HEK293T (cell line): ENCODE measurements at regions of chr19 and their contacts with region 1.

Region 1: GRCh38 chr19:47436712-47437401 is 17.5 kb upstream of the MEIS3 start:
- DNase-seq: peak; percentile 83

Region 2: GRCh38 chr19:47483800-47484690 is 47.2 kb after region 1 on chr19 and contains the start of gene KPTN:
- CTCF ChIA-PET with region 1: interaction called, 8 read pairs
- POLR2A ChIA-PET with region 1: interaction called, 12 read pairs
- DNase-seq: peak; percentile 95

Region 3: DNA sequence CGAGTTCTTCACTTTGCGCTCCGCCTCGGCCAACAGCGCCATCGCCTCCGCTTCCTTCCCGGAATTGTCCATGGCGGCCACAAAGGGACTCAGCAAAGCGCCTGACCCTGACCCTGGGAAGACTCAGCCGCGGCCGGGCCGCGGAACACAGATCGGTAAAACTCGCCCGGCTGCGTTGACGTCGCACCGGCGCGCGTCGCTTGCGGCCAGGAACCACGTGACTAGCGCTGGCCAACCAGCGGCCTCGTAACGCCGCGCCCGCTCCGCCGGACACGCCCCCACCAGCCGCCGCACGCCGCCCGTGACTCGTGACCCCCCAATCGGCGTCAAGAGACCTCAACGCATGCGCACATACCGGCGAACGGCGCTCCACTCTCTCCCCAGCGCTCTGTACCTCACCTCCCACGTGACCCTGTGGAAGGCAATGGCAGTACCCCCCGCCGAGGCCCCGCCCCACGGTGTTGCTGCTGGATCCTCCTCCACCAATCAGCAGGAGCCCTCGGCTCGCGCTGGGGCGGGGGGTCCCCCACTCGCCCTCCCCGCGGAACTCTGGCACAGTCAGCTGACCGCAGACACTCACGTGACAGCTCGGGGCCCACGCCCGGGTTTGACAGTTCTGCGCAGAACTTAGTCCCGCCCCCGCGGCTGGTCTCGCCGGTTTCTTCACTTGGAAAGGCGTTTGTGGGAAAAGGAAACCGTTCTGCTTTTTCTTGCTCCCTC is 78.2 kb after region 1 on chr19 and contains the start of gene NAPA:
- CTCF ChIA-PET with region 1: interaction called, 10 read pairs
- POLR2A ChIA-PET with region 1: interaction called, 3 read pairs
- DNase-seq: peak; percentile 98